ENCODE measurements at regions of chr5 and their contacts with region 1.

Region 1: GRCh38 chr5:100777680-100778281 is 125.3 kb downstream of the ST8SIA4 start:
- DNase-seq: peak; percentile 56
- H3K4me3 Mint-ChIP-seq: no peak overlapping the region
- H3K27ac Mint-ChIP-seq: peak overlapping the region; percentile 74
- H3K4me1 Mint-ChIP-seq: peaks cover 43% of the 10 kb centered on the region
- H3K27me3 Mint-ChIP-seq: no peaks in the 10 kb centered on the region

Region 2: DNA sequence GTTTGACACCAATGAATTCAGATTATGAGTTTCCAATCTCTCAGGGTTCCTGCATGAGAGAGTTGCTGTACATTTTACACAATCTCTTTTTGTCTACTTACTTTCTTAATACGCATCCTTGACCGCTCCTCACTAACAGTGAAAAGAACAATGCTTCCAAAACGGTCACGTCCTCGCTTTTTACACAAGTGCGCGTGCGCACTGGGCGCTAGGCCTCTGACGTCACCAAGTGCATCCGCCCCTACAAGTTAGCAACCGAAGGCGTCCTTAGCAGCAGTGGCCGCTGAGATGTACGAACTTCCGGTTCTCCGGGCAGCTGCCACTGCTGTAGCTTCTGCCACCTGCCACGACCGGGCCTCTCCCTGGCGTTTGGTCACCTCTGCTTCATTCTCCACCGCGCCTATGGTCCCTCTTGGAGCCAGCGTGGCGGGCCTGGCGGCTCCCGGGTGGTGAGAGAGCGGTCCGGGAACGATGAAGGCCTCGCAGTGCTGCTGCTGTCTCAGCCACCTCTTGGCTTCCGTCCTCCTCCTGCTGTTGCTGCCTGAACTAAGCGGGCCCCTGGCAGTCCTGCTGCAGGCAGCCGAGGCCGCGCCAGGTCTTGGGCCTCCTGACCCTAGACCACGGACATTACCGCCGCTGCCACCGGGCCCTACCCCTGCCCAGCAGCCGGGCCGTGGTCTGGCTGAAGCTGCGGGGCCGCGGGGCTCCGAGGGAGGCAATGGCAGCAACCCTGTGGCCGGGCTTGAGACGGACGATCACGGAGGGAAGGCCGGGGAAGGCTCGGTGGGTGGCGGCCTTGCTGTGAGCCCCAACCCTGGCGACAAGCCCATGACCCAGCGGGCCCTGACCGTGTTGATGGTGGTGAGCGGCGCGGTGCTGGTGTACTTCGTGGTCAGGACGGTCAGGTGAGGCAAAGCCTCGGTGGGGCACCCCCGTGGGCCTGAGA is 242.4 kb before region 1 on chr5 and contains the start of gene FAM174A:
- CTCF ChIA-PET with region 1: no interaction called
- intact Hi-C with region 1: loop called (anchors 5 kb)
- DNase-seq: peak; percentile 96
- H3K4me3 Mint-ChIP-seq: peak within 1 kb of the TSS; percentile 94
- H3K27ac Mint-ChIP-seq: peak within 1 kb of the TSS; percentile 75
- H3K4me1 Mint-ChIP-seq: peaks cover 16% of the 10 kb centered on the region
- H3K27me3 Mint-ChIP-seq: no peaks in the 10 kb centered on the region
- total RNA-seq, gene FAM174A: 3.1 to 3.9 TPM

Region 3: DNA sequence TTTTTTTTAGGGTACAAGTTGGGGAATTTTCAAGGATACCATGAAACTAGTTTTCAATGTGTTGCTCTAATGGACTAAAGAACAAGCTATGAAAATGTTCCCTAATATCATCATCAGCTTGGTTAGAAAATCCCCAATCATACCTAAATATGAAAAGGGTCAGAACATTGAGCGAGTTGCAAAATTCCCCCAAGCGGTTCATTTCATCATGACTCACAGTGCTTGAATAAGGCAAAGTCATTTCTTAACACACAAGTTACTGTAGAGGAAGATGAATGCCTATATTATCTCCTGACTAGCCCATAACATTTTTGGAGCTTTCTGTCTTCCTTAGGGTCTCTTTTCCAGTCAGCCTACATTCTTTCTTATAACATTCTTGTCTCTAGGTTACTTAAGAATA is 62.6 kb after region 1 on chr5:
- CTCF ChIA-PET with region 1: interaction called, 4 read pairs
- intact Hi-C with region 1: loop called (anchors 1 kb)
- DNase-seq: peak; percentile 69
- H3K4me3 Mint-ChIP-seq: no peak overlapping the region
- H3K27ac Mint-ChIP-seq: peak overlapping the region; percentile 77
- H3K4me1 Mint-ChIP-seq: peaks cover 62% of the 10 kb centered on the region
- H3K27me3 Mint-ChIP-seq: no peaks in the 10 kb centered on the region

Region 4: GRCh38 chr5:100872408-100873190 is 94.8 kb after region 1 on chr5:
- CTCF ChIA-PET with region 1: no interaction called
- intact Hi-C with region 1: loop called (anchors 1 kb)
- DNase-seq: peak; percentile 65
- H3K4me3 Mint-ChIP-seq: no peak overlapping the region
- H3K27ac Mint-ChIP-seq: peak overlapping the region; percentile 64
- H3K4me1 Mint-ChIP-seq: peaks cover 43% of the 10 kb centered on the region
- H3K27me3 Mint-ChIP-seq: no peaks in the 10 kb centered on the region

Region 5: DNA sequence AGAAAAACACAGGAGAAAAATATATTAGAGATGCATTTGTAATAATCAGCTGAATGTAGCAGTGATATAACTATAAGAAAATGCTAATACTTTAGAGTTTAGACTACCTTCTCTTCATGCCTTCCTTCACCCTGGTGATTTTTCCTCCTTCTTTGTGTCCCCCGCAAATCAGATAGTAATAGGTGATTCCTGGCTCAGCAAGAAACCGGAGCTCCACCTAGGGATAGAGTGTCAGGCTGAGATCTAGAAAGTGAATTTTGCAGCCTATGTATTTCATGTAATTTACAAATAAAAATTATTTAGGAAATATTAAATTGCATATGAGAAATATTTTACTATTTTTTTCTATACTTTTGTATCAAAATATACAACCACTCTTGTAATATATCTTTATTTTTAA is 235.1 kb after region 1 on chr5:
- CTCF ChIA-PET with region 1: no interaction called
- intact Hi-C with region 1: loop called (anchors 1 kb)
- DNase-seq: no peak
- H3K4me3 Mint-ChIP-seq: no peak overlapping the region
- H3K27ac Mint-ChIP-seq: no peak overlapping the region
- H3K4me1 Mint-ChIP-seq: no peaks in the 10 kb centered on the region
- H3K27me3 Mint-ChIP-seq: no peaks in the 10 kb centered on the region

Region 6: DNA sequence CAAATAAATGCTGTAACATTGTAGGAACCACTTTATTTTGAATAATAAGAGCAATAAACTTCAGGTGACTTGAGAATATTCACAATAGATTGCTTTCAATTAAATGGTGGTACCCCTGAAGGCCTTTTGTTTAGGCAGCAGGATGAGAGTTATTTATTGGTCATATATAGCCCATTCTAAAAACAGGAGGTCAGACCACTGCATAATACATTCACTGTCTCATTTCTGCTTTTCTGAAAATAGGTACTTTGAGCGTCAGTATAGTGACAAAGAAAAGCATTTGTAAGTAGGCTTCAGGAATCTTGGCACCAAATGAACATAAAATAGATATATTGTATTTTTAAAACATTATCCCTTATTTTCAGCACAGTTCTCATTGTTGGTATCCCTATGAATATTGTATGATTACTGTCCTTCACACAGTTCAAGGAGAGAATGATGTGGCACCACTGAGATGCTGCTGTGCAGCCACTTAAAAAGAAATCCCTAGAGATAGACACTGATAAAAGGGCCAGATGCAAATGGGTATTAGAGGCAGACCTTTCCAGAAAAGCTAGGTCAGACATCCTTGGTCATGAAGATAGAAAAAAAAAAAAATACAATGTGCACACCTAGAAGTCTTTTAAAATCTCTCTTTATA is 507.1 kb after region 1 on chr5:
- CTCF ChIA-PET with region 1: no interaction called
- intact Hi-C with region 1: no loop called
- DNase-seq: no peak
- H3K4me3 Mint-ChIP-seq: no peak overlapping the region
- H3K27ac Mint-ChIP-seq: no peak overlapping the region
- H3K4me1 Mint-ChIP-seq: no peaks in the 10 kb centered on the region
- H3K27me3 Mint-ChIP-seq: peaks cover 2% of the 10 kb centered on the region

Region 7: GRCh38 chr5:101390151-101390908 is 612.5 kb after region 1 on chr5:
- CTCF ChIA-PET with region 1: no interaction called
- intact Hi-C with region 1: loop called (anchors 10 kb)
- DNase-seq: peak; percentile 10
- H3K4me3 Mint-ChIP-seq: no peak overlapping the region
- H3K27ac Mint-ChIP-seq: no peak overlapping the region
- H3K4me1 Mint-ChIP-seq: no peaks in the 10 kb centered on the region
- H3K27me3 Mint-ChIP-seq: no peaks in the 10 kb centered on the region

Measured in activated naive CD4-positive, alpha-beta T cell treated with anti-CD3 and anti-CD28 coated beads for 36 hours (primary cell).